Calu3 (cell line): ENCODE measurements at regions of chr13 and their contacts with region 1.

Region 1: DNA sequence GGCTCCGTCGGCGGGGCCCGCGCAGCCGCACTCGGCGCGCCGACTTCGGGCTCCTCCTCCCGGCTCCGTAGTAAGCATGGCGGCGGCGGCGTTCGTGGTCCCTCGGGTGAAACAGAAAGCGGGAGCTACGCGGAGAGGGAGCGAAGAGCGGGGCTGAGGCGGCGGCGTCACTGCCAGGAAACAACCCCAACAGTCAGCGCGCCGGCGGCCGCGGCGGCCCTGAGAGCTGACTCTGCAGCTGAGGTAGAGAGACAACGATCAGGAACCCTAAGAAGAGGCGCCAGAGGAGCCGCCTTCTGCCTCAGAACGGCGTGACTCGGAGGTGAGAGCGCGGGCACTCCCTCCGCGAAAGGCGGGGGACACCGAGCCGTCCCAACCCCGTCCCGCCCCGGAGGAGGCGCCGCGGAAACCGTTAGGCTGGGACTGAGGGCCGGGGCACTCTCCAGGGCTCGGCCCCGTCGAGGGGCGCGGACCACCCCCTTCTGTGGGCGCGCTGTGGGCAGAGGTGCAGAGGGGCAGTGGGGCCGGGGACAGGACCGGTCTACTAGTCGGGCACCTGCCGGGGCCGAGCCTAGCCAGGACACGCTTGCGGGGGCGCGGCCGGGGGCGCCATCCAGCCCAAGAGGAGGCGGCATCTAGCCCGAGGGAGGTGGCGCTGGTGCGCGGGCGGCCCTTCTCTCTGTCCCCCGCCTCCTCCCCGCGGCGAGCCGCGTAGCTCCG is at the start of gene FNDC3A:
- DNase-seq: peak; percentile 84
- H3K4me3 Mint-ChIP-seq: peak within 1 kb of the TSS; percentile 87
- H3K27ac Mint-ChIP-seq: peak within 1 kb of the TSS; percentile 94
- H3K4me1 Mint-ChIP-seq: peaks cover 18% of the 10 kb centered on the region
- H3K27me3 Mint-ChIP-seq: no peaks in the 10 kb centered on the region
- CTCF ChIP-seq: no peak
- total RNA-seq, gene FNDC3A: 36.2 and 43.2 TPM in 2 replicates

Region 2: DNA sequence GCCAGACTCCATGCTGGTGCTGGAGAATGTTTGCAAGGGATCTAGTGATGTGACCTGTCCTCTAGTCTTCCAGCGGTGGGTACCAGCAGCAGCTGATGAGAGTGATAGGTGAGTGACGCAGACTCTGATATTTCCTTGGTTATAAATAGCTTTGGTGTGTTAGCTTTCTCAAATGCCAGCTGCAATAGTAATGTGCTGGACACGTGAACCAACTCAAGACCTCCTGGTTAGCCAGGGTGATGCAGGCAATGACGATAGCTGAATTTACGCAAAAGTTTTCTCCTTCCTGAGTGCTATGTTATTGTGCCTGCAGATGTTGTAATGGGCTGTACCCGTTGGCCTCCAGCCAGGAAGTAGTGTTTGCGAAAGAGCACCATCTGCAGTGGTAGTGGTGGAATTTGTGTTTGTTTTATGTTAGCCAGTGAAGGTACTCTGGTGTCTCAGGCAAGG is 192.8 kb before region 1 on chr13:
- CTCF ChIA-PET with region 1: no interaction called
- intact Hi-C with region 1: loop called (anchors 5 kb)
- DNase-seq: peak; percentile 70
- H3K4me3 Mint-ChIP-seq: no peak overlapping the region
- H3K27ac Mint-ChIP-seq: no peak overlapping the region
- H3K4me1 Mint-ChIP-seq: peaks cover 17% of the 10 kb centered on the region
- H3K27me3 Mint-ChIP-seq: no peaks in the 10 kb centered on the region
- CTCF ChIP-seq: no peak

Region 3: DNA sequence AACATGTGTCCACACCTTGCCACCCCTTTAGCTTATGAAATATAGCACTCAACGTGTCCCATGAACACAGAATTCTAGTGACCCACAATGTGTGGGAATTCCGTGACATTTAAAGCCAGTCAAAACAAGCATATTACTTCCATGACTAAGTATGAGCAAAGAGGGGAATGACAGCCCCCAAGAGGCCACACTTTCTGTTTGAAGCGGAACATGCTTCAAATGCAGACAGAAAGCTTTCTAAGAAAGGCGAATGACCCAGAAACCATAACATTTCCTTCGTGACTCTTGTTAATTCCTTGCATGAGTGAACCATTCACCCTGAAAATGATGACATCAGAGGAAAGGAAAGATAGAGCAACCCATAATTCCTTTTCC is 122.3 kb before region 1 on chr13:
- CTCF ChIA-PET with region 1: no interaction called
- intact Hi-C with region 1: no loop called
- DNase-seq: no peak
- H3K4me3 Mint-ChIP-seq: no peak overlapping the region
- H3K27ac Mint-ChIP-seq: no peak overlapping the region
- H3K4me1 Mint-ChIP-seq: no peaks in the 10 kb centered on the region
- H3K27me3 Mint-ChIP-seq: no peaks in the 10 kb centered on the region
- CTCF ChIP-seq: no peak

Region 4: DNA sequence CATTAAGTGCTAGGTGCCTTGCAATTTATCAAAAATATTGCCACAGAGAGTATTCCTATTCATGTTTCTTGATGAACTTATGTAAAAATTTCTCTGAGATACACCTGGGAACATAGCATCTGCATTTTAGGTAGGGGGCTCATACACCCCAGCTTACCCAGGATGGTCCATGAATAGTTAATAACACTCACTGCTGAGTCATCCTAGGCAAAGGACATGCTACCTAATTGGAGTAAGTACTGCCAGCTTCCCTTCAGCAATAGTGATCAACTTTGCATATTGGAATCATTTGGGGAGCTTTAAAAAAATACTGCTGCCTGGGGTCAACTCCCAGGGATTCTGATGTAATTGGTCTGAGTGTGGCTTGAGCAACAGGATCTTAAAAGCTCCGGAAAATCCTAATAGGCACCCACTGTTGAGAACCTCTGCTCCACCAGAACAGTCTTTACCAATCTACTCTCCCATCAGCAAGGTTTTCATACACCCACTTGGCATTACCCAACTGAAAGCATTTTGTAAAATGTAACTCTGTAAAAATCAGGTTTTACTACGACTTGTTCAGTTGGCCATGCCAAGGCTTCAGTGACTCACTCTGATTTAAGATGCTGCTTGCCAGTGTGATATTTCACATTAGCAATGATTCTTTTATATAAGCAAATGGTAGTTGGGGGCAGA is 67.5 kb before region 1 on chr13:
- CTCF ChIA-PET with region 1: no interaction called
- intact Hi-C with region 1: loop called (anchors 5 kb)
- DNase-seq: no peak
- H3K4me3 Mint-ChIP-seq: no peak overlapping the region
- H3K27ac Mint-ChIP-seq: peak overlapping the region; percentile 30
- H3K4me1 Mint-ChIP-seq: peaks cover 38% of the 10 kb centered on the region
- H3K27me3 Mint-ChIP-seq: no peaks in the 10 kb centered on the region
- CTCF ChIP-seq: no peak